ENCODE measurements at regions of chr3 and their contacts with region 1.

Region 1: GRCh38 chr3:113745273-113746068 is 578 bp downstream of the NAA50 start:
- DNase-seq: peak; percentile 51 to 95 (median 78)
- ATAC-seq: peak; percentile 71
- H3K4me3 ChIP-seq: peak overlapping the region; percentile 83 to 86
- H3K4me3 Mint-ChIP-seq: peak overlapping the region; percentile 95
- H3K27ac ChIP-seq: peak overlapping the region; percentile 97 to 99
- H3K27ac Mint-ChIP-seq: peak overlapping the region; percentile 100
- H3K4me1 ChIP-seq: peaks cover 46% of the 10 kb centered on the region
- H3K4me1 Mint-ChIP-seq: peaks cover 72% of the 10 kb centered on the region
- H3K27me3 ChIP-seq: no peaks in the 10 kb centered on the region
- H3K27me3 Mint-ChIP-seq: no peaks in the 10 kb centered on the region
- CTCF ChIP-seq: peak; percentile 66

Region 2: GRCh38 chr3:113051302-113051711 is 694.2 kb before region 1 on chr3:
- CTCF ChIA-PET with region 1: no interaction called
- POLR2A ChIA-PET with region 1: no interaction called
- intact Hi-C with region 1: loop called in 1 of 2 experiments (anchors 5 kb)
- DNase-seq: peak; percentile 75 to 91 (median 84)
- ATAC-seq: peak; percentile 100
- H3K4me3 ChIP-seq: no peak overlapping the region
- H3K4me3 Mint-ChIP-seq: no peak overlapping the region
- H3K27ac ChIP-seq: no peak overlapping the region
- H3K27ac Mint-ChIP-seq: no peak overlapping the region
- H3K4me1 ChIP-seq: no peaks in the 10 kb centered on the region
- H3K4me1 Mint-ChIP-seq: no peaks in the 10 kb centered on the region
- H3K27me3 ChIP-seq: no peaks in the 10 kb centered on the region
- H3K27me3 Mint-ChIP-seq: no peaks in the 10 kb centered on the region
- CTCF ChIP-seq: peak; percentile 84

Region 3: DNA sequence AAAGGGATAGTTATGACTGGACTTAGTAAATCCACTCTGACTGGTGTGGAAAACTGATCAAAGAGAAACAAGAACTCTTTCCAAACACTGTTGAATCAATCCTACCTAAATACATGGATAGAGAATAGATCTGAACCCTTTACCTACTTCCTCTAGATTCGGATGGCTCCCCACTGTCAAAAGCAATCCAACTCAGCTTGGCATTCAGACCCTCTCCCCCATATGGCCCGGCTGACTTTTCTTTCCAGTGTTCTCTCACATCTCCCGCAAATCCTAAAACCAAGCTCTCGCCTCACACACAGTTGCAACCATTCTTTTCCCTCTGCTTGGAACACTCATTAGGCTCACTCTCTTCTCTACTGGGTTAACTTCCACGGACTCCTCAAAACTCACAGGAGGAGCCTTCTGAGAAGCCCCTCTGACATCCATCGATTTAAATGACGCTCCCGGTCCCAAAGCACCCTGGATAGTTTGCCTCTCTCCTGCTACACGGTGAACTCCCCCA is 231.2 kb before region 1 on chr3:
- CTCF ChIA-PET with region 1: interaction called, 7 read pairs
- POLR2A ChIA-PET with region 1: interaction called, 14 read pairs
- intact Hi-C with region 1: loop called (anchors 1 to 5 kb)
- DNase-seq: no peak
- ATAC-seq: no peak
- H3K4me3 ChIP-seq: peak overlapping the region; percentile 82 to 96
- H3K4me3 Mint-ChIP-seq: no peak overlapping the region
- H3K27ac ChIP-seq: peak overlapping the region; percentile 89 to 91
- H3K27ac Mint-ChIP-seq: no peak overlapping the region
- H3K4me1 ChIP-seq: peaks cover 10% of the 10 kb centered on the region
- H3K4me1 Mint-ChIP-seq: peaks cover 18% of the 10 kb centered on the region
- H3K27me3 ChIP-seq: no peaks in the 10 kb centered on the region
- H3K27me3 Mint-ChIP-seq: peaks cover 3% of the 10 kb centered on the region
- CTCF ChIP-seq: no peak

Region 4: GRCh38 chr3:113696658-113697499 is 48.6 kb before region 1 on chr3:
- CTCF ChIA-PET with region 1: interaction called, 7 read pairs
- POLR2A ChIA-PET with region 1: interaction called, 51 read pairs
- intact Hi-C with region 1: loop called (anchors 1 kb)
- DNase-seq: peak; percentile 96 to 100 (median 99)
- ATAC-seq: peak; percentile 84
- H3K4me3 ChIP-seq: peak overlapping the region; percentile 69 to 86
- H3K4me3 Mint-ChIP-seq: no peak overlapping the region
- H3K27ac ChIP-seq: peak overlapping the region; percentile 88 to 89
- H3K27ac Mint-ChIP-seq: no peak overlapping the region
- H3K4me1 ChIP-seq: peaks cover 32% of the 10 kb centered on the region
- H3K4me1 Mint-ChIP-seq: peaks cover 28% of the 10 kb centered on the region
- H3K27me3 ChIP-seq: no peaks in the 10 kb centered on the region
- H3K27me3 Mint-ChIP-seq: no peaks in the 10 kb centered on the region
- CTCF ChIP-seq: no peak

Region 5: GRCh38 chr3:114056130-114057010 is 310.9 kb after region 1 on chr3 and contains the starts of genes CCDC191 and QTRT2:
- CTCF ChIA-PET with region 1: no interaction called
- POLR2A ChIA-PET with region 1: no interaction called
- intact Hi-C with region 1: loop called in 1 of 2 experiments (anchors 2 kb)
- DNase-seq: peak; percentile 94 to 100 (median 98)
- ATAC-seq: peak; percentile 95
- H3K4me3 ChIP-seq: peak within 1 kb of the TSS; percentile 70 to 96
- H3K4me3 Mint-ChIP-seq: peak within 1 kb of the TSS; percentile 94
- H3K27ac ChIP-seq: peak within 1 kb of the TSS; percentile 84 to 97
- H3K27ac Mint-ChIP-seq: peak within 1 kb of the TSS; percentile 98
- H3K4me1 ChIP-seq: peaks cover 20% of the 10 kb centered on the region
- H3K4me1 Mint-ChIP-seq: peaks cover 53% of the 10 kb centered on the region
- H3K27me3 ChIP-seq: no peaks in the 10 kb centered on the region
- H3K27me3 Mint-ChIP-seq: no peaks in the 10 kb centered on the region
- CTCF ChIP-seq: no peak
- total RNA-seq, gene CCDC191: 2.8 to 2.9 TPM
- total RNA-seq, gene QTRT2: 31.7 to 36.6 TPM

Region 6: GRCh38 chr3:114290911-114291901 is 545.7 kb after region 1 on chr3:
- CTCF ChIA-PET with region 1: interaction called, 3 read pairs
- POLR2A ChIA-PET with region 1: interaction called, 3 read pairs
- intact Hi-C with region 1: loop called in 1 of 2 experiments (anchors 10 kb)
- DNase-seq: peak; percentile 86 to 97 (median 93)
- ATAC-seq: peak; percentile 76
- H3K4me3 ChIP-seq: peak overlapping the region in 1 of 2 experiments; percentile 48
- H3K4me3 Mint-ChIP-seq: peak overlapping the region; percentile 80
- H3K27ac ChIP-seq: peak overlapping the region; percentile 60 to 89
- H3K27ac Mint-ChIP-seq: peak overlapping the region; percentile 96
- H3K4me1 ChIP-seq: peaks cover 27% of the 10 kb centered on the region
- H3K4me1 Mint-ChIP-seq: peaks cover 43% of the 10 kb centered on the region
- H3K27me3 ChIP-seq: no peaks in the 10 kb centered on the region
- H3K27me3 Mint-ChIP-seq: no peaks in the 10 kb centered on the region
- CTCF ChIP-seq: peak; percentile 87